HCT116 (cell line): ENCODE measurements at regions of chr13 and their contacts with region 1.

Region 1: GRCh38 chr13:114313061-114313860 is 1.0 kb upstream of the CHAMP1 start:
- DNase-seq: no peak
- ATAC-seq: peak; percentile 49
- H3K4me3 ChIP-seq: peak overlapping the region; percentile 72 to 85
- H3K27ac ChIP-seq: peak overlapping the region; percentile 93
- H3K4me1 ChIP-seq: peaks cover 3 to 22% of the 10 kb centered on the region in 2 experiments
- H3K27me3 ChIP-seq: no peaks in the 10 kb centered on the region
- CTCF ChIP-seq: no peak
- POLR2A ChIP-seq: peak; percentile 23
- RAD21 ChIP-seq: no peak

Region 2: DNA sequence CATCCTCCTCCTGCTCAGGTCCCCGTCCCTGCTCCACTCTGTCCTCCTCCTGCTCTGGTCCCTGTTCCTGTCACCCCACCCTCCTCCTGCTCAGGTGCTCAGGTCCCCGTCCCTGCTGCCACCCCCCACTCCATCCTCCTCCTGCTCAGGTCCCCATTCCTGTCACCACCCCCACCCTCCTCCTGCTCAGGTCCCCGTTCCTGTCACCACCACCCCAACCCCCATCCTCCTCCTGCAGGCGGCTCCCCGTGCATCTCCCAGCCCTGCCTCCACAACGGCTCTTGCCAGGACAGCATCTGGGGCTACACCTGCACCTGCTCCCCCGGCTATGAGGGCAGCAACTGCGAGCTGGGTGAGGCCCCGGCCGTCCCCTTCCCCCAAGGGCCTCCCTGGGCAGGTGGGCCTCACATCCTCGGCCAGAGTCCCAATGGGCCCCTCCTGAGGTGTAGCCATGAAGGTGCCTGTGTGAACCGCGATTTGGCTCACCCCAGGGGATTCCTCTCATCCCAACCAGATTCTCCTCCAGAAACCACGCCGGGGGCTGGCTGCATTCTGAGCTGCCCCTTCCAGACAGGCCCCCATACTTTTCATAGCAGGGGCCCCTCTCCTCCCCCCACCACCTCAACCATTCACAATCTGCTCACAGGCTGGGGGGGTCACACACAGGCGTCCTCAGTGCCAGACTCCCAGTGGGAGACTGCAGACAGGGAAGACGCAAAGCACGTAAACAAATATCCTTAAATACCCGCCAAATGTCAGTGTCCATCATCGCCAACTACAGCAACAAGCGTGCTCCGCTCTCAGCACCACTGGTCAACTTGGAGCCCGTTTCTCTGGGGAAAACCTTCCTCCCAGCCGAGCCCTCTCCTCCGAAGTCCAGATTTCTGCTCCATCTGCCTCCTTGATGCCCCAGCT is 1150.2 kb before region 1 on chr13:
- CTCF ChIA-PET with region 1: no interaction called
- POLR2A ChIA-PET with region 1: no interaction called
- RAD21 ChIA-PET with region 1: no interaction called
- intact Hi-C with region 1: no loop called
- DNase-seq: no peak
- ATAC-seq: 0 out of 2 replicates have a peak, but pooled peaks have one; percentile 35
- H3K4me3 ChIP-seq: no peak overlapping the region
- H3K27ac ChIP-seq: no peak overlapping the region
- H3K4me1 ChIP-seq: no peaks in the 10 kb centered on the region
- H3K27me3 ChIP-seq: peaks cover 3% of the 10 kb centered on the region; the same call in 1 of the 2 replicates
- CTCF ChIP-seq: no peak
- POLR2A ChIP-seq: no peak
- RAD21 ChIP-seq: no peak

Region 3: DNA sequence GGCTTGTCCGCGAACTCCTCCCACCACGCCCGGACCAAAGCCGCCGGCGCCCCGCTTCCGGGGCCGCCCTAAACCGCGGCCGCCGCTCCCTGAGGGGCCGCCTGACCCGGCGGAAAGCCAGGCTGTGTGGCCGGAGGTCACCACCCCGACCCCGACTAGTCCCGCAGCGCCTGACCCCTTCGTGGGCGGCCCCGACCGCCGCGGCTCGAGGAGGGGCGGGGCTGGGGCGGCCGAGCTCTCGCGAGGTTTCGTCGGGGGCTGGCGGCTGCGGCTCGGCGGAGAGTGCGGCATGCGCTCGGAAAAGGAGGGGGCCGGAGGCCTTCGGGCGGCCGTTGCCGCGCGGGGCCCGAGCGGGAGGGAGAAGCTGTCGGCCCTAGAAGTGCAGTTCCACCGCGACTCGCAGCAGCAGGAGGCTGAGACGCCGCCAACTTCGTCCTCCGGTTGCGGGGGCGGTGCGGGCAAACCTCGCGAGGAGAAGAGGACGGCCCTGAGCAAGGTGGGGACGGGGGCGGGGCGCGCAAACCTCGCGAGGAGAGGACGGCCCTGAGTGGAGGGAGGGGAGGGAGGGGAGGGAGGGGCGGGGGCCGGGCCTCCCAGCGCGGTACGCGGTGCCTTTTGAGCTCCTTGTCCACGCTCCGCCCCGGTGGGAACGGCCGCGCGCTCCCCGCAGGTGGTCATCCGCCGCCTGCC is 31.8 kb before region 1 on chr13 and contains the start of gene UPF3A:
- CTCF ChIA-PET with region 1: no interaction called
- POLR2A ChIA-PET with region 1: interaction called, 7 read pairs
- RAD21 ChIA-PET with region 1: no interaction called
- intact Hi-C with region 1: loop called (anchors 2 kb)
- DNase-seq: peak; percentile 81
- ATAC-seq: peak; percentile 84
- H3K4me3 ChIP-seq: peak within 1 kb of the TSS; percentile 72 to 89
- H3K27ac ChIP-seq: peak within 1 kb of the TSS; percentile 96
- H3K4me1 ChIP-seq: peaks cover 15 to 23% of the 10 kb centered on the region in 2 experiments
- H3K27me3 ChIP-seq: no peaks in the 10 kb centered on the region
- CTCF ChIP-seq: no peak
- POLR2A ChIP-seq: no peak
- RAD21 ChIP-seq: no peak
- total RNA-seq, gene UPF3A: 31.8 TPM